ENCODE measurements at regions of chr1 and their contacts with region 1.

Region 1: GRCh38 chr1:147599362-147600118 is 58.2 kb downstream of the BCL9 start:
- DNase-seq: peak; percentile 92 to 99 (median 98)

Region 2: DNA sequence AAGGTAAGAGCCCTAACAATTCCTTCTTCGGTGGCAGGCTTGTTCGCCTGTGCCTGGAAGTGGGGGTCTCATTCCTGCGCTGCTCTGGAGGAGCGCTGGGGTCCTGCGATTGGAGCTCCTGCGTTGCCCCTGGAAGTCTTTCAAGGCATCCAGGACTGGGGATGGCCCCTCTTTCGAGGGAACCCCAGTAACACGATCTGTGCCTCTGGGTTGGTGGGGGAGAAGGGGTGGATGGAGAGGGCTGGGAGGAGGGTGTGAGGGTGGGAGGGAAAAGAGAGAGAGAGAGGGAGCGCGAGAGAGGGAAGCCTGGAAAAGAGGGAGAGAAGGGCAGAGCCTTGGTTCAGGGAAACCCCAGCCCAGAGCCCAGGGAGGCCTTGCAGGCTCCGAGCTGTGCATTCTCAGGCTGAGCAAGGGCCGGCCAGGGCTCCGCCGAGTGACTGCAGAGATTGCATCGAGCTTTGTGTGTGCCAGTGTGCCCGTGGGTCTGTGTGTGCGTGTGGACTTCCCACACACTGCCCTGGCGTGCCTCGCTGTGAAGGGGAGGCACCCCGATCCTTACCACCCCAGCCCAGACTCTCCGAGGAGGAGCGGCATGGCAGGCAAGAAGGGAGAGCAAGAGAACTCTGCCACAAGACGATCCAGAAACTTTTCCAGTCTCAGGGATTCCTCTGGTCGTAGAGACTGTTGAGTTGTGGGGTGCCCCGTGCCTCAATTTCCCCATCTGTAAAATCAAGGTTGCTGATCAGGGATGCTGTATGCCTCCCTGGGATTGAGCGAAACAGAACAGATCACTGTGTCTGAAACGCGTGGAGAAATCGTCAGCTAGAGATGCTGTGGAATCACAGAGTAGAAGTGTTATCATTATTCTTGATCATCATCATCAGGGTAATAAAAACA is 57.6 kb before region 1 on chr1:
- intact Hi-C with region 1: loop called (anchors 2 kb)
- DNase-seq: peak; percentile 22 to 80 (median 61)